ENCODE measurements at regions of chr2 and their contacts with region 1.

Region 1: DNA sequence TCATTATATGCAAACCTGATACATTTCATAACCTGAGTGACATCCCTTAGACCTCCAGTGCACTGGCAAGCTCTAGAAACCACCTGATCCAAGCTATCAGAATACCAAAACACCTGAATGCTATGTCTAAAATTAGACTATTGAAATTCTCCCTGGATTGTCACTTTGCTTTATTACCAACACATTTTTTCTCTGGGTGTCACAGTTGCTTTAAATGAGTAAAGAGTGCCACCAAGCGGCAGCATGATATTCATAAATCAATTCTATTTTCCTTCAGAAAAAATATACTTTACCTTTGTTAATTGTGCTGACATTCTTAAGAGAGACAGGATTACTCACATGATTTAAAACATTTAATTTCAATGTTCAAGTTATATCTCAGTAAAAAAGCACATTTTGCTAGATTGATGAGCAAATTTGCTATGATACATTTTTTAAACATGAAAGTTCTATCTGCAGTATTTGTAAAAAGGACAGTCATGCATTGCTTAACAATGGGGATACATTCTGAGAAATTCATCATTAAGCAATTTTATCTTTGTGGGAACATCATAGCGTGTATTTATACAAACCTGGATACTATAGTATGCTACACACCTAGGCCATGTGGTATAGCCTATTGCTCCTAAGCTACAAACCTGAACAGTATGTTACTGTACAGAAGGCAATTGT is 338.4 kb upstream of the SLC39A10 start:
- DNase-seq: peak; percentile 67
- ATAC-seq: peak; percentile 29
- H3K4me3 ChIP-seq: no peak overlapping the region
- H3K27ac ChIP-seq: peak overlapping the region; percentile 38
- H3K4me1 ChIP-seq: peaks cover 29% of the 10 kb centered on the region
- H3K27me3 ChIP-seq: no peaks in the 10 kb centered on the region
- CTCF ChIP-seq: peak; percentile 84

Region 2: GRCh38 chr2:193584522-193584938 is 1734.0 kb before region 1 on chr2:
- CTCF ChIA-PET with region 1: no interaction called
- POLR2A ChIA-PET with region 1: no interaction called
- intact Hi-C with region 1: loop called (anchors 10 kb)
- DNase-seq: peak; percentile 62
- ATAC-seq: peak; percentile 90
- H3K4me3 ChIP-seq: no peak overlapping the region
- H3K27ac ChIP-seq: no peak overlapping the region
- H3K4me1 ChIP-seq: no peaks in the 10 kb centered on the region
- H3K27me3 ChIP-seq: no peaks in the 10 kb centered on the region
- CTCF ChIP-seq: peak; percentile 75

Region 3: GRCh38 chr2:193963472-193964119 is 1355.0 kb before region 1 on chr2:
- CTCF ChIA-PET with region 1: no interaction called
- POLR2A ChIA-PET with region 1: no interaction called
- intact Hi-C with region 1: loop called (anchors 1 kb)
- DNase-seq: peak; percentile 66
- ATAC-seq: peak; percentile 70
- H3K4me3 ChIP-seq: no peak overlapping the region
- H3K27ac ChIP-seq: no peak overlapping the region
- H3K4me1 ChIP-seq: no peaks in the 10 kb centered on the region
- H3K27me3 ChIP-seq: no peaks in the 10 kb centered on the region
- CTCF ChIP-seq: peak; percentile 82

Region 4: GRCh38 chr2:194698012-194698411 is 620.6 kb before region 1 on chr2:
- CTCF ChIA-PET with region 1: no interaction called
- POLR2A ChIA-PET with region 1: no interaction called
- intact Hi-C with region 1: loop called (anchors 2 kb)
- DNase-seq: peak; percentile 2
- ATAC-seq: peak; percentile 23
- H3K4me3 ChIP-seq: no peak overlapping the region
- H3K27ac ChIP-seq: peak overlapping the region; percentile 69
- H3K4me1 ChIP-seq: peaks cover 37% of the 10 kb centered on the region
- H3K27me3 ChIP-seq: no peaks in the 10 kb centered on the region
- CTCF ChIP-seq: no peak

Region 5: DNA sequence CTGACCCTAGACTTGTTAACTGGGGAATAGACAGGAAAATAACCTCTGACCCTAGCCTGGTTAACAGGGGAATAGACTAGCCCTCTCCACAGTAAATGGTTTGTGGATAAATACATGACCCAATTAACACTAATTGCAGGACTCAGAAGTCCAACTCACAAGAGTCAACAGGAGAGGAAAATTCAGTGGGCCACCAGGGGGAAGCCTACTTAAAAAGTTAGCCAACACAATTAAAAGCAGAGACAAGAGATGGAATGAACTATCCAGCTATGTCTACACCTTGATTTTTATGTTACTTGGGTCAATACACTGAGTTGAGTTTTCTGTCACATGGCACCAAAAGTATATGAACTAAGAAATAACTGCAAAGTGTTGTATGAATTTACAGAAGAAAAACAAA is 179.6 kb after region 1 on chr2:
- CTCF ChIA-PET with region 1: no interaction called
- POLR2A ChIA-PET with region 1: no interaction called
- intact Hi-C with region 1: loop called (anchors 10 kb)
- DNase-seq: peak; percentile 59
- ATAC-seq: peak; percentile 37; the same call in 1 of the 2 replicates
- H3K4me3 ChIP-seq: no peak overlapping the region
- H3K27ac ChIP-seq: no peak overlapping the region
- H3K4me1 ChIP-seq: 0 out of 2 replicates have a peak, but pooled peaks cover 7% of the 10 kb centered on the region
- H3K27me3 ChIP-seq: no peaks in the 10 kb centered on the region
- CTCF ChIP-seq: peak; percentile 72

Region 6: DNA sequence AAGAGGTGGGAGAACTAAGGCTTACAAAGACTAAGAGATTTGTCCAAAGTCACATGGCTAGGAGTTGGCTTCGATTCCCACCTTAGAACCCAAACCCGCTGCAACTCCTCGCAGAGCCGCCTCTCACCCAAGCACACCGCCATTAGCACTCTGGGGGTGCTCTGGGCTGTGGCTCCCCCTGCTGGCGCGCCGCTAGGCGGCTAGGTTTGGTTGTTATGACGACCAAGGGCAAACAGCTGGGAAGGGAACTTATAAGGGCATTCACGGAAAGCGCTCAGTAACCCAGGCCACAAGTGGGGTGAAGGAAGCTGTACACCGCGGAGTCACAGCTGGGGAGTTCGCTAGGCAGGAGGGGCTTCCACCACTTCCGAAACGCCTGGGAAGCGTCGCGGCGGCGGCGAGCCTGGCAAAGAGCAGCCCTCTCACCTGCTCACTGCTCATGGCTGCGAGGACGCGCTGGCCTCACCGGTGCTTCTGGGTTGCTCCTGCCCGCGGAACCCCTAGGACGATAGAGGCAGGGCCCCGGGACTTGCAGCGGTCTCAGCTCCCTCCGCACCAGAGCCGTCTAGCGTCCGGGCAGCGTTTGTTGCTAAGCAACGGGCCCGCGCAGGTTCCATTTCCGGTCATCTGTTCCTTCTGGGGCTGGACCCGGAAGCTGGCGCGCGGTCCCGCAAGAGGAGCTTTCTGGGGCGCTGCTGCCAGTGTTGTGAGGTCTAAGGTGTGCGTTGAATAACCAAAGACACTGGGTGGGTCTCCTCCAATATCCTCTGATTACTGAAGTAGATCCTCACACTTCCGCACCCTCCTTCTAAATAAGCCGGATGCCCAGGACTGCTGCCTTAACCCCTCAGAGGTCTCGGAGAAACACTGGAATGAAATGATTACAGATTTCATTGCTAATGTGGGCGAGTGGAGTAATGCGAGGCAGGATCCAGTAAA is 750.0 kb after region 1 on chr2 and contains the start of gene DNAH7:
- CTCF ChIA-PET with region 1: no interaction called
- POLR2A ChIA-PET with region 1: no interaction called
- intact Hi-C with region 1: loop called (anchors 5 kb)
- DNase-seq: peak; percentile 77
- ATAC-seq: peak; percentile 93
- H3K4me3 ChIP-seq: peak within 1 kb of the TSS; percentile 83
- H3K27ac ChIP-seq: no peak within 1 kb of the TSS
- H3K4me1 ChIP-seq: peaks cover 15% of the 10 kb centered on the region
- H3K27me3 ChIP-seq: no peaks in the 10 kb centered on the region
- CTCF ChIP-seq: peak; percentile 67
- total RNA-seq, gene DNAH7: 1.9 and 3.1 TPM in 2 replicates